Posterior vena cava (tissue), 2 donors: ENCODE measurements at regions of chr4 and their contacts with region 1.

Region 1: GRCh38 chr4:7744142-7744804 is 195.4 kb downstream of the AFAP1 start:
- DNase-seq: no peak

Region 2: DNA sequence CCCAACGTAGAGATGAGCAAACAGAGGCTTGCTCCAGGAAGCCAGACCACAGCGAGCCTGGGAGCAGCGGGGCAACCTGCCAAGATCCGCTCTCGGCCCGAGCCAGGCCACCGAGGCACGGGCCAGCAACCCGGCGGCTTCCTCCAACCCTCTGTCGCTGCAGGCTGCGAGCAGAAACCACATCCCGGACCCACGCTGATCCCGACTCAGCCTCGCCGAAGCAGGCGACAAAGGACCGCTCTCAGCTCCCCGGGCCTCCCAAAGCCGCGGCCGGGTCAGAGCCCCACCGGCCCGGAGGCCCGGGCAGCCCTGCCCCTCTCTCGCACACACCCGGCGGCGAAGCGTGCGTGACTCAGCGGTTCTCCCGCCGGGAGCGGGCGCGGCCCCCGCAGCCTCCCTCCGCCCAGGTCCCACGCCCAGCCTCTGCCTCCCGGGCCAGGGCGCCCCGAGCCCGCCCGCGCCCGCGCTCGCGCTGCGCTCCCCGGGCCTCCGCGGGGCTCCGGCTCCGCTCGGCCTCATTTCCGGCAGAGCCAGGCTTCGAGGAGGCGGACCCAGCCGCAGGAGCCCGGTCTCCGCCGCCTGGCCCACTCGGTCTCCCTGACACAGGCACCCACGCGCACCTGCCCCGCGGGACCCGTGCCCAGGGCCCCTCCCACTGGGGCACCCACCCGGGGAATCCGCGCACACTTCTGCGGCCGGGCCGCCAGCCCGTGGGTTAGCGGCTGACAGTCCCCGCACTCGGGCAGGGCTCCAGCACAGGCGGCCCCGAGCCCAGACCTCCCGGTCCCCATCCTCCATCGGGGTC is 1273.6 kb before region 1 on chr4:
- intact Hi-C with region 1: loop called in 1 of 2 experiments (anchors 10 kb)
- DNase-seq: peak; percentile 87

Region 3: DNA sequence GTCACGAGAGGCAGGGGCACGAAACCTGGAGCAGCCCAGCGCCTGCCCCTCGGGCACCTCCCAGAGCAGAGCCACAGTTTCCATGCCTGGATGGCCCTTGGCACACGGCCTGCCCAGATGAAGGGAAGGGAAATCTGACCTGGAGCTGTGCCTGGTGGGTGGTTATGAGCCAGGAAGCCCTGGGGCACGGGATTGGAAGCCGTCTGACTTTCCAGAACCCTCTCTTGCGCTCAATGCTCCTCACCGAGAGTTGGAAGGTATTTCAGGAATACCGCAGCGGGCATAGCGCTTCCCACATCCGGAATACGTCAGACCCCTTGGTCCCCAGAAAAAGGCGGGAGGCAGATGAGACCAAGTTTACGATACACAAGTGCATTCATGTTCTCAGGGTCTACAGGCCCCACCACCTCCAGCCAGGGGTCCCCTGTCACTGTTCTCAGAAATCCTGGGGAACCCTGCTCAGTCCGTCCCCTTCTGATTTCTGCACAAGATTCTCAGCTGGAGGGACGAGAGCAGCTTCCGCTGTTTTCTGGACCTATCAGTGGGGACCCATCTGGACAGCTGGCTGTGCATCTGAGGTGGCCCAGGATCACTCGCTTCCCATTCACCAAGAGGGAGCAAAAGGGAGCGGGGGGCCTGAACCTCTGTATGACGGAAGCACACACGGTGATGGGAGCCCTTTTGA is 22.5 kb after region 1 on chr4:
- intact Hi-C with region 1: loop called in 1 of 2 experiments (anchors 1 kb)
- DNase-seq: peak; percentile 72